ENCODE measurements at regions of chr12 and their contacts with region 1.

Region 1: GRCh38 chr12:52278541-52279421 is 4.3 kb downstream of the KRT86 start:
- DNase-seq: peak; percentile 57
- ATAC-seq: peak; percentile 81
- H3K4me3 ChIP-seq: peak overlapping the region; percentile 34 to 50
- H3K27ac ChIP-seq: peak overlapping the region; percentile 73
- H3K4me1 ChIP-seq: peaks cover 41 to 65% of the 10 kb centered on the region in 2 experiments
- H3K27me3 ChIP-seq: no peaks in the 10 kb centered on the region
- CTCF ChIP-seq: peak in 2 of 3 experiments; percentile 96 to 99; a peak in 4 of 6 replicates
- POLR2A ChIP-seq: no peak
- RAD21 ChIP-seq: no peak

Region 2: DNA sequence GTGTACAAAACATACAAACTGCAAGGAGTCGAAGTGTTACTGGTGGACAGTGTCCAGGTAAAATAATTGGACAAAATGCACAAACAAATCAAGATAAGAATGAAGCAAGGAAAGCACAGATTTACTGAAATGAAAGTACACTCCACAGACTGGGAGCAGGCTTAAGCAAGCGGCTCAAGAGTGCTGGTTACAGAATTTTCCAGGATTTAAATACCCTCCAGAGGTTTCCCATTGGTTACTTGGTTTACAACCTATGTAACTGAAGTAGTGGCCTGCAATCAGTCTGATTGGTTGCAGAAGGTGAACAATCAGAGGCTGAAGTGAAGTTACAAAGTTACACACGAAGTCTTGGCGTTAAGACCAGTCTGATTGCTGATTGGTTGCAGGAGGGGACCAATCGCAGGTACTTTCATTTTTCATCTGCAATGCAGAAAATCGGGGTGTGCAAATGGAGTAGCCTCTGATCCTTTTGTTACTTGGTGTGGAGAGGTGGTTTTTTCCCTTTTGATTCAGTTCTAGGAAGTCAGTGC is 699.4 kb before region 1 on chr12:
- CTCF ChIA-PET with region 1: no interaction called
- POLR2A ChIA-PET with region 1: no interaction called
- RAD21 ChIA-PET with region 1: no interaction called
- intact Hi-C with region 1: no loop called
- DNase-seq: no peak
- ATAC-seq: no peak
- H3K4me3 ChIP-seq: no peak overlapping the region
- H3K27ac ChIP-seq: no peak overlapping the region
- H3K4me1 ChIP-seq: no peaks in the 10 kb centered on the region
- H3K27me3 ChIP-seq: no peaks in the 10 kb centered on the region
- CTCF ChIP-seq: no peak
- POLR2A ChIP-seq: no peak
- RAD21 ChIP-seq: no peak

Region 3: DNA sequence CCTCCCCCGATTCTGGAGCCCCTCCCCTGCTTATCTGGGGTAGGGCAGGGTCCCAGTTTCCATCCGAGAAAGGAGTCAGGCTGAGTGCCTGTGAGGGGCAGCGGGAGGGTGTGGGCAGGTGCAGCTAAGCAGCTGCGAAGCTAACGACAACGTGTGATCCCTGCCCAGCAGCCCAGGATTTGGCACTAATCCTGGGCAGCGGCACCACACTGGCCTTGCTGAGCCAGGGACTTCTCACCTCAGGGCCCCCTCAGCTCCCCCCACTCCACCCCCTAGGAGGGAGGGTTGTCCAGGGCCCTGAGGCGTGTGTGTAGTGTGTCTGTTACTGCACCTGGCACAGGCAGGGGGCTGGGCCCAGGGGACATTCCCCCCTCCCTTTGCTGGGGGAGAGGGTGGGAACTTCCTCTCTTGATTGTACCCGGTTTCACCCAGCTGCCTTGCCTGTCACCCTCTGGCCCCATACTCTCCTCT is 197.5 kb before region 1 on chr12:
- CTCF ChIA-PET with region 1: no interaction called
- POLR2A ChIA-PET with region 1: no interaction called
- RAD21 ChIA-PET with region 1: no interaction called
- intact Hi-C with region 1: no loop called
- DNase-seq: no peak
- ATAC-seq: no peak
- H3K4me3 ChIP-seq: no peak overlapping the region
- H3K27ac ChIP-seq: no peak overlapping the region
- H3K4me1 ChIP-seq: peaks cover 0 to 5% of the 10 kb centered on the region in 2 experiments; a peak in 1 of 4 replicates
- H3K27me3 ChIP-seq: no peaks in the 10 kb centered on the region
- CTCF ChIP-seq: no peak
- POLR2A ChIP-seq: no peak
- RAD21 ChIP-seq: no peak

Region 4: DNA sequence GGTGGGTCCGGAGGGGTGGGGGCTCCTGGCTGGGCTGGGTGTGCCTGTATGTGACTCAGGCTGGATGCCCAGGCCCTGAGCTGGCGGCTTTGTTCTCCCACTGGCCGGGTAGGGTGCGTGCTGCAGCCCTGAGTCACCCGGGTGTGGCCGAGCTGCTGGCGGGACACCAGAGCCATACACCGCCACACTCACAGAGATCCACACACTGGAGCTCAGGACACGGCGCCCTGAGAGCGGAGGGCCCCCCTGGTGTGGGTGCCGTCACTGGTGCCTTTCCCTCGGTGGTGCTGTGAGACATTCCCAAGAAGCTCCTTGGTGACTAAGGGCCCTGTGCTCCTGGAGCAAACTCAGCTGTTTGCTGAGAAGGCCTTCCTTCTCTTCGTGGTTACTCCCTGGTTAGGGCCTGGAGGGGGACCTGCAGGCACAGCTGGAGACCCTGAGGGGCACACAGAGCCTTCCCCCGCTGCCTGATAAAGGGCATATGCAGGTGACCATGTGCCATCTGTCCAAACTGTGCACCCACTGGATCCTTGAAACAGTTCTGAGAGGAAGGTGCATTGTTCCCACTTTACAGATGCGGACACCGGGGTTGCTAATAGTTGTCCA is 131.3 kb before region 1 on chr12:
- CTCF ChIA-PET with region 1: interaction called, 17 read pairs
- POLR2A ChIA-PET with region 1: interaction called, 41 read pairs
- RAD21 ChIA-PET with region 1: no interaction called
- intact Hi-C with region 1: loop called (anchors 1 kb)
- DNase-seq: peak; percentile 99
- ATAC-seq: peak; percentile 61
- H3K4me3 ChIP-seq: peak overlapping the region; percentile 46 to 55
- H3K27ac ChIP-seq: peak overlapping the region; percentile 100
- H3K4me1 ChIP-seq: peaks cover 83 to 99% of the 10 kb centered on the region in 2 experiments
- H3K27me3 ChIP-seq: no peaks in the 10 kb centered on the region
- CTCF ChIP-seq: no peak
- POLR2A ChIP-seq: no peak
- RAD21 ChIP-seq: no peak

Region 5: GRCh38 chr12:52192173-52192791 is 86.5 kb before region 1 on chr12:
- CTCF ChIA-PET with region 1: interaction called, 6 read pairs
- POLR2A ChIA-PET with region 1: interaction called, 32 read pairs
- RAD21 ChIA-PET with region 1: no interaction called
- intact Hi-C with region 1: no loop called
- DNase-seq: peak; percentile 97
- ATAC-seq: peak; percentile 88
- H3K4me3 ChIP-seq: peak overlapping the region; percentile 39 to 52; a peak in 3 of 4 replicates
- H3K27ac ChIP-seq: peak overlapping the region; percentile 62
- H3K4me1 ChIP-seq: peaks cover 54 to 85% of the 10 kb centered on the region in 2 experiments
- H3K27me3 ChIP-seq: no peaks in the 10 kb centered on the region; the same call in 1 of the 2 replicates
- CTCF ChIP-seq: no peak
- POLR2A ChIP-seq: no peak
- RAD21 ChIP-seq: no peak

Region 6: DNA sequence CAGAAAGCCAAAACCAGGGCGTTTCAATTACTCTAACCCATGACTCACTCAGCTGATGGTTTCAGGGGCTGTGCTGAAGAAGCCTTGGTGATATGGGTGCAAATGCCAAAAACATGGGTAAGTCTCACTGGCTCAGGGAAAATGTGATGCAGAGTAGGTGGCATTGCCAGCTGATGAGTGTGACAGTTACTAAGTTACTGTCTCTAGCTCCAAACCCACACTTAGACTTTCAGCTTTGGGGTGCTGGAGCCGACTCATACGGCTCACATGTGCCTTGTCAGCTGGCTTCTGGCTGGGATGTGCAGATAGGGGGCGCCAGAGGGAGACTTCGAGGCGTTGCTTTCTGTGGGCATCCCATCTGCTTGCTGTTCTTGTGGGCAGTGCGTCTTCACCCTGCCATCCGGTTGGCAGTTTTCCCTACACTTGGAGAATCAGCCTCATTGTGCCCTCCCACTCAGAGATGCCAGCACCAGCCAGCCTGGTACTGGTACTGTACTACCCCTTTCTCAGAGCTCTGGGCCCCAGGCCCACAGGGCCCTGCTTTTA is 56.8 kb before region 1 on chr12:
- CTCF ChIA-PET with region 1: interaction called, 35 read pairs
- POLR2A ChIA-PET with region 1: interaction called, 10 read pairs
- RAD21 ChIA-PET with region 1: interaction called, 6 to 7 read pairs
- intact Hi-C with region 1: no loop called
- DNase-seq: peak; percentile 67
- ATAC-seq: peak; percentile 83
- H3K4me3 ChIP-seq: peak overlapping the region in 1 of 2 experiments; percentile 15; a peak in 1 of 4 replicates
- H3K27ac ChIP-seq: no peak overlapping the region
- H3K4me1 ChIP-seq: peaks cover 26 to 86% of the 10 kb centered on the region in 2 experiments
- H3K27me3 ChIP-seq: no peaks in the 10 kb centered on the region
- CTCF ChIP-seq: peak in 2 of 3 experiments; percentile 86 to 91; a peak in 4 of 6 replicates
- POLR2A ChIP-seq: no peak
- RAD21 ChIP-seq: no peak

Region 7: GRCh38 chr12:52260361-52261205 is 18.2 kb before region 1 on chr12:
- CTCF ChIA-PET with region 1: interaction called, 13 read pairs
- POLR2A ChIA-PET with region 1: interaction called, 6 read pairs
- RAD21 ChIA-PET with region 1: no interaction called
- intact Hi-C with region 1: no loop called
- DNase-seq: no peak
- ATAC-seq: no peak
- H3K4me3 ChIP-seq: no peak overlapping the region
- H3K27ac ChIP-seq: no peak overlapping the region
- H3K4me1 ChIP-seq: peaks cover 17 to 25% of the 10 kb centered on the region in 2 experiments
- H3K27me3 ChIP-seq: no peaks in the 10 kb centered on the region
- CTCF ChIP-seq: no peak
- POLR2A ChIP-seq: no peak
- RAD21 ChIP-seq: no peak

Region 8: GRCh38 chr12:52870351-52871290 is 591.8 kb after region 1 on chr12:
- CTCF ChIA-PET with region 1: interaction called, 7 read pairs
- POLR2A ChIA-PET with region 1: no interaction called
- RAD21 ChIA-PET with region 1: no interaction called
- intact Hi-C with region 1: loop called (anchors 5 kb)
- DNase-seq: no peak
- ATAC-seq: peak; percentile 71
- H3K4me3 ChIP-seq: 0 out of 4 replicates have a peak overlapping the region, but pooled peaks of 1 of the 2 experiments have one; percentile 16
- H3K27ac ChIP-seq: peak overlapping the region; percentile 81
- H3K4me1 ChIP-seq: peaks cover 48 to 64% of the 10 kb centered on the region in 2 experiments
- H3K27me3 ChIP-seq: no peaks in the 10 kb centered on the region
- CTCF ChIP-seq: peak in 2 of 3 experiments; percentile 89 to 96; a peak in 4 of 6 replicates
- POLR2A ChIP-seq: no peak
- RAD21 ChIP-seq: no peak